Astrocyte of the cerebellum (primary cell): ENCODE measurements at regions of chr3 and their contacts with region 1.

Region 1: DNA sequence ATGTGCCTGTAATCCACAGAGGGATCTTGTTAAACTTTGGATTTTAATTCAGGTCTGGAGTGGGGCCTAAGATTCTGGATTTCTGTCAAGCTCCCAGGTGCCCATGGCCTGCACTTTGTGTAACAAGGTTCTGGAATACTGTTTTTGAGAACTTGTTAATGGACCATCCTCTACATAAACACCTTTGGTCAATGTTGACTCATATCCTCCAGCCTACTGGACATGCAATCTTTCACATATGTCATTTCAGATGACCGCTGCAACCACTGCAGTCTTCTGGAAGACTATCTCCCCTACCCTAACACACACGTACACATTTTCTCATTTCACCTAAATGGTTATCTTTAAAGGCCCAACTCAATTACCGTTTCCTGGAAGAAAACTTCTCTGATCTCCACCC is 302.1 kb upstream of the TPRG1 start:
- DNase-seq: no peak
- H3K4me3 ChIP-seq: no peak overlapping the region
- CTCF ChIP-seq: no peak

Region 2: GRCh38 chr3:188819939-188820338 is 49.7 kb before region 1 on chr3:
- in situ Hi-C with region 1: loop called (anchors 5 kb)
- DNase-seq: no peak
- H3K4me3 ChIP-seq: no peak overlapping the region
- CTCF ChIP-seq: no peak

Region 3: DNA sequence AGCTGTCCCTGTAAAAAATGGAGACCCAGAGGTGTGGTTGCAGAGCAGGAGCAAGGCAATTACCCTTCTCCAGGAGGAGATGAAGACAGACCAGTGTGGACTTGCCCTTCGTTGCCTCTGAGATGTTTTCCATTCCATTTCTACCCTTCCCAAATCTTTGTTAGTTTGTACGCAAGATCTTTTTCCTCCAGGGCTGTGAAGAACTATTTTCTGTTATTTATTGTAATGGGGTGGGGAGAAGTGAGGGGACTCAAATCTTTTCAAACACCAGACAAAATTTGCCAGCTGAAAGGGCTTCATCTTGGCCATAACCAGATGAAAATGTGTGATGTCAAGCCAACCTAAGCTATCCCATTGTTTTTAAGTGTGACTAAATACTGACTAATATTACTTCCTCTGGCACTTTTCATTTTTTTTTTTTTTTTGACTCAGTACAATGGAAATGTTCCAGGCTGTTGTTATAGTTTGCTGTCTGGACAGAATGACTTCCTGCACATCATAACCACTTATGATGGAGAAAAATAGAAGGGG is 30.9 kb after region 1 on chr3:
- in situ Hi-C with region 1: no loop called
- DNase-seq: peak; percentile 85
- H3K4me3 ChIP-seq: no peak overlapping the region
- CTCF ChIP-seq: no peak